ENCODE measurements at regions of chr2 and their contacts with region 1.

Region 1: DNA sequence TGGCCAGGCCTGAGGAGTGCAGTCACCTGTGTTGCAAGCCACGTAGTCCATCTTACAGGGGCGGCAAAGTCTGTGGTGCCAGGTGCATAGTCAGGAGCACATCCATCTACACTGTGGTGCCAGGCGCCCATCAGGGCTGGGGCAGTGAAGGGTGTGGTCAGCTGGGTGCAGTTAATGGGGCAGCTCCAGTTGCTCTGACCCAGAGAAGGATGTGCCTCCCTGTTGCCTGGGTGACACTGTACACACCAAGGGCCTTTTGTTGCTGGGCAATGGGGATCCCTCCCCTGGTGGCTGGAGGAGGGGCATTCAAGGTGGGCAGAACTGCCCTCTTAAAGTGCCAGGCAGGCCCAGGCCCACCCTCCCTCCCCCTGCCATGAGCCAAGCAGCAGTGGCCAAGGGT is 28.3 kb upstream of the IMP4 start:
- DNase-seq: no peak

Region 2: DNA sequence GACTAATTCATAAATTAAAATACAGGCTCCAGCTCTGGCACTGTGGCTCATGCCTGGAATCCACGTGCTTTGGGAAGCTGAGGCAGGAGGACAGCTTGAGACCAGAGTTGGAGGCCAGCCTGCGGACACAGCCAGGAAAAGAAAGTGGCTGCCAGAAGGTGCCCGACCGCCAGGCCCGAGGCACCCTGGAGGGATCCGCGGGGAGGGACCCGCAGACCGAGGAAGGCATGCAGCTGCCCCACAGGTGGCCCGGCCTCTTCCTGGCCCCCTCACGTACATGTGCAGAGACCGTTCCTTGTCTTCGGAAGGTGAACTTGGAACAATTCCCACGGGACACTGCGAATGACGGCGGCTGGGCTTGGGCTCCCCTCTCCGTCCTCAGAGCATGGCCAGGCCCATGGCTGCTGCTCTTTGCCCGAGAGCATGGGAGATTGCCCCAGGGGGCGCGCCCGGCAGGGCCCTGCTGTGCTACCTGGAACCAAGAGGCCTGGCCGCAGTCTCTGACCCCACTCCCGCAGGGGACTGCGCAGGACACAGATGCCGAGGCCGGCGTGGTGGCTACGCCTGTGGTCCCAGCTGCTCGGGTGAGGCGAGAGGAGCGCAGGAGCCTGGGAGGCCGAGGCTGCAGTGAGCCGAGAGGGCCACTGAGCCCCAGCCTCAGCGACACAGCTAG is 27.2 kb before region 1 on chr2:
- intact Hi-C with region 1: loop called in 1 of 2 experiments (anchors 1 kb)
- DNase-seq: peak; percentile 79

Region 3: GRCh38 chr2:130332271-130333073 is 18.1 kb after region 1 on chr2:
- intact Hi-C with region 1: no loop called
- DNase-seq: peak; percentile 92